ENCODE measurements at regions of chr22 and their contacts with region 1.

Region 1: DNA sequence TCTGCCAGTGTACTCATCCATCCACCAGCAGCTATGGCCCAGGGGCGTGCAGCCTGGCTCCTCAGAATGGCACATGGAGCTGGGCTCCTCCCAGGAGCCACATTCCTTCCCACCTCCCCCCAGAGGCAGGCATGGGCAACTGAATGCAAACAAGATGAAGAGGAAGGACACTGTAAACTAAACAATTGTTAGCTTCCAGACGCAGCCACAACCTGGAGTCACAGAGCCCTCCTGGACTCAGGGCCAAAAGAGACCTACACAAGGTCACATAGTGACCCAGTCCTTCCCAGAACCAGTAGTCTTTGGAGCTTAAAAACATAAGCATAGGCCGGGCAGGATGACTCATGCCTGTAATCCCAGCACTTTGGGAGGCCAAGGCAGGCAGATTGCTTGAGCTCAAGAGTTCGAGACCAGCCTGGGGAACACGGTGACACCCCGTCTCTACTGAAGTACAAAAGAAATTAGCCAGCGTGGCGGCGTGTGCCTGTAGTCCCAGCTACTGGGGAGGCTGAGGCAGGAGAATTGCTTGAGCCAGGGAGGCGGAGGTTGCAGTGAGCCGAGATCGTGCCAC is 30.7 kb upstream of the CLDN5 start:
- DNase-seq: peak; percentile 41 to 70
- H3K4me3 ChIP-seq: no peak overlapping the region
- H3K27ac ChIP-seq: no peak overlapping the region; the same call in 1 of the 2 replicates
- H3K4me1 ChIP-seq: peaks cover 0 to 5% (median 1%) of the 10 kb centered on the region in 4 experiments; a peak in 6 of 7 replicates
- H3K27me3 ChIP-seq: peaks cover 0 to 2% (median 0%) of the 10 kb centered on the region in 4 experiments; a peak in 1 of 7 replicates
- CTCF ChIP-seq: peak; percentile 34 to 59 (median 45)
- EP300 ChIP-seq: peak in 1 of 2 experiments; percentile 58; a peak in 1 of 3 replicates
- POLR2A ChIP-seq: no peak
- RAD21 ChIP-seq: peak; percentile 8 to 37; a peak in 2 of 4 replicates

Region 2: GRCh38 chr22:19492504-19493174 is 62.3 kb before region 1 on chr22:
- CTCF ChIA-PET with region 1: no interaction called
- POLR2A ChIA-PET with region 1: no interaction called
- DNase-seq: no peak
- H3K4me3 ChIP-seq: no peak overlapping the region
- H3K27ac ChIP-seq: no peak overlapping the region
- H3K4me1 ChIP-seq: no peaks in the 10 kb centered on the region
- H3K27me3 ChIP-seq: no peaks in the 10 kb centered on the region
- CTCF ChIP-seq: no peak
- EP300 ChIP-seq: no peak
- POLR2A ChIP-seq: no peak
- RAD21 ChIP-seq: no peak

Region 3: DNA sequence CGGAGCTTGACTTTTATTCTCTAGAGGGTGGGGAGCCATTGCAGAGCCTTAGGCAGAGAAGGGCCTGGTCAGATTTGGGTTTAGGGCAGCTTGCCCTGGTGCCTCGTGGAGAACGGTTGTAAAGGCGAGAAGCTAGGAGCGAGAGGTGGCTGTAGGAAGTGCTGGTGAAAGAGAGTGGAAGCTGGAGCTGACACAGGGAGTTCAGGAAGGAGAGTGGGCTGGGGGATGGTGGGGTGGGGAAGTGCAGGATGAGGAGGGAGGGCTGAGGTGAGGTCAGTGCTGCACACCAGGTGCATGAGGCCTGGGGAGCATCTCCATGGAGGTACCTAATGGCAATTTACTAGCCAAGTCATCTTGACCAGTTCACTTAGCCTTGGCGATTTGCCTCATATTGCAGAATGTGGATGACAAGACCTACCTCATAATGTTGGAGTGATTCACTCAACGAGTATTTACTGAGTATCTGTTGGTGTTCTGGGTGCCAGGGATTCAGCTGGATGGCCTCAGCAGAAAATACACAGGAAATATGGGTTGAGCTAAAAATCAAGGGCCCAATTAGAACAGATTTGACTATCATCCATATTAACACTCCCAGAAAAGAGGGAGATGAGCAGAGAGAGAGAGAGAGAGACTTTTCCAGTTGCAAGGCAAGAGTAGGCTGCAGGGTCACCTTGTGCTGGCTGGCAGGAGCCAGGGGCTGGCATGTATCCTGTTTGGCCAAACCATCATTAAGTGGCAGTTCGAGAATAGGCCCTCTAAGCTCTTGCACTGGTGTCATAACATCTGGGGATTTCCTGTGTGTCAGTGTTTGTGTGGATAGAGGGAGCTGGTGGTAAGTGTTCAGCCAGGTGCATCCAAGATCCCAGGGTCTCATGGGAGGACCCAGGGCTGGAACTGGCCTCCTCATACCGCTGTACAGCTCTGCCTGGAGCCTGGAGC is 13.7 kb after region 1 on chr22:
- CTCF ChIA-PET with region 1: interaction called, 14 read pairs
- POLR2A ChIA-PET with region 1: no interaction called
- DNase-seq: no peak
- H3K4me3 ChIP-seq: no peak overlapping the region
- H3K27ac ChIP-seq: no peak overlapping the region
- H3K4me1 ChIP-seq: peaks cover 0 to 3% (median 0%) of the 10 kb centered on the region in 4 experiments; a peak in 2 of 7 replicates
- H3K27me3 ChIP-seq: no peaks in the 10 kb centered on the region; a peak in 2 of 7 replicates
- CTCF ChIP-seq: no peak
- EP300 ChIP-seq: no peak
- POLR2A ChIP-seq: no peak
- RAD21 ChIP-seq: no peak